BJ (cell line): ENCODE measurements at regions of chr1 and their contacts with region 1.

Region 1: GRCh38 chr1:156728597-156729462 is at the start of gene ISG20L2:
- DNase-seq: peak; percentile 87
- H3K4me3 ChIP-seq: peak within 1 kb of the TSS; percentile 89
- H3K27me3 ChIP-seq: no peaks in the 10 kb centered on the region
- CTCF ChIP-seq: no peak
- polyA plus RNA-seq, gene ISG20L2: 30.6 and 36.6 TPM in 2 replicates

Region 2: DNA sequence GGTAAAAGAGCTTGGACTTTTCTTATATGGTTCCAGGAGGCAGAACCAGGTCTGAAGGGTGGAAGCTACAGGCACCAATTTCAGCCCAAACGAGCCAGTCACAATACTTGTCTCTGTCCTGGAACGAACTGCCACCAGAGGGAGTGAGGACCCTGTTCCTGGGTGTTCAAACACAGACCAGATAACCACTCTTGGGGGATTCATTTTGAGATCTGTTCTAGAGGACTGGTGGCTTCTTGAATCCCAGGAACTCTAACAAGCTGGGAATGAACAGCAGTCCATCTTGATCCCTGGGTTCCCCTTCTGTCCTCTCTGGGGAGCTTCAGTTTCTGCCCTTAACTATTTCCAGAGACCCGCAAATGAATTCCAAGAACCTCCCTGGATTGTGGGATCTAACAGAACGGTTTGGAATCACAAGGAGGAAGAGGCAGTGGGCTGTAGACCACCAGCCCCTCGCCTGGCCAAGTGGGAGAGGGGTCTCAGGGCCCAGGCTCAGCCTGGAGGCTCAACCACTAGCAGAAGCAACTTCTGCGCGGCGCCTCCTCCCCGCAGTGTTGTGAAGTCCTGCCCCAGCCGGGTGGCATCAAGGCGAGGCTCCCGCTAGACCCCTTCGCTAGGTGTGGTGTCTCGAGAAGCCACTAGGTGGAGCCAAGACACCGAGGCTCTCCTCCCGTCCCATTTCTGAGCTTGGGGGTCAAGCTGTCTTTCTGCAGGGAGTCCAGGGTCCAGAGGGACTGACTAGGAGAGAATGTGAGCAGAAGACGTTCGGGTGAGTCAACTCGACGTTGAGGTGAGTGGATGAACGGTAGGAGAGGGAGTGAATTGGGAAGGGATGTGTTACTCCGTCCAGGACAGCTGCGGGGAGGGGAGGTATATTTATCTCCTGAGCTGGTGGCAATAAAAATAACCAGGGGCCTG is 39.5 kb before region 1 on chr1:
- CTCF ChIA-PET with region 1: interaction called, 1,556 read pairs
- POLR2A ChIA-PET with region 1: interaction called, 8 read pairs
- DNase-seq: no peak
- H3K4me3 ChIP-seq: peak overlapping the region; percentile 15; the same call in 1 of the 2 replicates
- H3K27me3 ChIP-seq: no peaks in the 10 kb centered on the region
- CTCF ChIP-seq: peak; percentile 95

Region 3: DNA sequence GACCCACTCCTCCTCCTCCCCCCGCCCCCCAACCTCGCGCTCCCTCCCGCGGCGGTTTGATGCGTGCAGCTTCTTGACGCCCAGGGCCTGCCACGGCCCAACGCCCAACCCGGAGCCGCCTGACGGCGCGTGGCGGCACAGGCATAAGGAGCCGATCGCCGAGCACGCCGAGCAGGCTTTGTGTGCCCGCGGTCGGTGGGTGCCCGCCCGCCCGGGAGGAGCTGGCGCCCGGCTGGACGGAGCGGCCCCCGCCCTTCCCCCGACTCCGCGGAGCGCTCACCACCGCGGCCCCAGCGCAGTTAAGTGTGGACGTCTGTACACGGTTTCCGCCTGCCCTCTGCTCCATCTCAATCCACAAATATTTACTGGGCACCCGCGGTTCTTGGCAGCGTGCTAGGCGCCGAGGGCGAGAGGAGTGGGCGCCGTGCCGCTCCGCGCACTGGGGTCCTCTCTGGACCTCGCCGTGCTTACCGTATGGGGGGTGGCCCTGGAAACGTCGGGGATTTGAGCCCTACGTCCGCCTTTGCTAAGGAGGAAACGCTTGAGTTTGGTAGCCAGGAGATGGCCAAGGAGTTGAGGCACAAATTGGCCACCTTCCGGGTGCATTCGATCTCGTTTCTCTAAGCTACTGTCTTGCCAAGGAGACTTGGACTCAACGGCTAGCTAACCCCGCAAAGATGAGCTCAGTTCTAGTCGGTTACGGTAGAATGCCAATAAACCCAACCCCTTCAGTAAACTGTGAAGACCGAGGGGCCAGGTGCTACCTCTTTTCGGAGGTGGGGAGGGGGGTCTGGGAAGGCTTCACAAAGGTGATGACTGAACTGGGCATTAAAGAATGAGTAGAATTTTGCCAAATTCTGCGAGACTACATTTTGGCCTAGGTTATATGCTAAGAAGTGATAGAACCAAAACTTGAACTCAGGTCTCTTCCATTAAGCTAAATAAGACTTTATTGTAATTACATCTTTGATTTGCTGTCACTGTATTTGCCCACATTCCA is 23.2 kb after region 1 on chr1:
- CTCF ChIA-PET with region 1: interaction called, 10 read pairs
- POLR2A ChIA-PET with region 1: no interaction called
- DNase-seq: peak; percentile 66
- H3K4me3 ChIP-seq: peak overlapping the region; percentile 79
- H3K27me3 ChIP-seq: no peaks in the 10 kb centered on the region
- CTCF ChIP-seq: 0 out of 2 replicates have a peak, but pooled peaks have one; percentile 10

Region 4: GRCh38 chr1:156797212-156797871 is 68.5 kb after region 1 on chr1:
- CTCF ChIA-PET with region 1: interaction called, 70 read pairs
- POLR2A ChIA-PET with region 1: interaction called, 3 read pairs
- DNase-seq: no peak
- H3K4me3 ChIP-seq: no peak overlapping the region
- H3K27me3 ChIP-seq: no peaks in the 10 kb centered on the region
- CTCF ChIP-seq: peak; percentile 85

Region 5: DNA sequence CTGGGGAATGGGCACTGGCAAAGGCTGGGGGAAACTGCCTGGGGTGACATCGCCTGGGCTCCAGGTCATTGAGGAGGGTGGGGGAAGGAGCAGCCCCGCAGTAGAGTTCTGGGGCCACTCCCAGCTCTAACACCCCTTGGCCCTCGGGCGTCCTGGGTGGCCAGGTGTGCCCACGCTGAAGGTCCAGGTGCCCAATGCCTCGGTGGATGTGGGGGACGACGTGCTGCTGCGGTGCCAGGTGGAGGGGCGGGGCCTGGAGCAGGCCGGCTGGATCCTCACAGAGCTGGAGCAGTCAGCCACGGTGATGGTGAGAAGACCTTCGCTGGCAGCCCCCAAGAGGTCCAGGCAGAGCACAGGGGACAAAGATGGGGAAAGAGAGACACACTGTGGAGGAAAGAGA is 139.5 kb after region 1 on chr1:
- CTCF ChIA-PET with region 1: interaction called, 140 read pairs
- POLR2A ChIA-PET with region 1: no interaction called
- DNase-seq: no peak
- H3K4me3 ChIP-seq: no peak overlapping the region
- H3K27me3 ChIP-seq: peaks cover 9% of the 10 kb centered on the region
- CTCF ChIP-seq: no peak